ENCODE measurements at regions of chr13 and their contacts with region 1.

Region 1: DNA sequence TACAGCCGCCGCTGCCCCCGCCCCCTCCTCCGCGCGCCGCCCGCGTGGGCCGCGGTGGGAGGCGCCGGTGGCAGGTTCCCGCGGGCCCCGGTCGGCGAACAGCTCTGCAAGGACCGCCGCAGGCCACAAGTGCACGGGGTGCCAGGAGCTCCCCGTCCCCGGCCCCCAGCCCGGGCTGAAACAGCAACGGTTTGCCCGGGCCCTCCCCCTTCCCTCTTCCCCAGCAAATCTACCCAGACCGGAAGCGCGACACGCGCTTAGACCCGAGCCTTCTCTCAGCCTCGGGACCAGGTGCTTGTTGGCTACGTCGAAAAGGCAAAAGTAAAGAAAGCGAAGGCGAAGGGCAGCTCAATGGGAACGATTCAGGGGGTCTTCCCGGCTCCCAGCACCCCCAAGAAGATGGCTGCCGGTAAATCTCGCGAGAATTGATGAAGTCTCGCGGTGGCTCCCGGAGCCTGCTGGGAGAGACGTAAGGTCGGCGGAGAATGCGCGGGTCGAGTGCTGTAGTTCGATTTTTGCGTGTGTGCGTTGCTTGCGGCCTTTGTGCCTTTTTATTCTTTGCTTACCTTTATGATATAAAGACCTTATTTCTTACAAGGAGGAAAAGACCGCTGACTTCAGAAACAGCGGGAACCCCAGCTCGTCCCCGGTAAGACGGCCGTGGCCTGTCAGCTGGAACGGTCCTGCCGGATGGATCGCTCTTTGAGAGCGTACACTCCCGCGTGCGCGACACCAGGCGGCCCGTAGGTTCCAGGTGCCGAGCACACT is at the start of gene RBM26:
- DNase-seq: peak; percentile 96
- H3K4me3 Mint-ChIP-seq: peak within 1 kb of the TSS; percentile 91
- H3K27ac Mint-ChIP-seq: peak within 1 kb of the TSS; percentile 97
- H3K4me1 Mint-ChIP-seq: peaks cover 41% of the 10 kb centered on the region
- H3K27me3 Mint-ChIP-seq: no peaks in the 10 kb centered on the region
- total RNA-seq, gene RBM26: 44.4 to 44.7 TPM

Region 2: DNA sequence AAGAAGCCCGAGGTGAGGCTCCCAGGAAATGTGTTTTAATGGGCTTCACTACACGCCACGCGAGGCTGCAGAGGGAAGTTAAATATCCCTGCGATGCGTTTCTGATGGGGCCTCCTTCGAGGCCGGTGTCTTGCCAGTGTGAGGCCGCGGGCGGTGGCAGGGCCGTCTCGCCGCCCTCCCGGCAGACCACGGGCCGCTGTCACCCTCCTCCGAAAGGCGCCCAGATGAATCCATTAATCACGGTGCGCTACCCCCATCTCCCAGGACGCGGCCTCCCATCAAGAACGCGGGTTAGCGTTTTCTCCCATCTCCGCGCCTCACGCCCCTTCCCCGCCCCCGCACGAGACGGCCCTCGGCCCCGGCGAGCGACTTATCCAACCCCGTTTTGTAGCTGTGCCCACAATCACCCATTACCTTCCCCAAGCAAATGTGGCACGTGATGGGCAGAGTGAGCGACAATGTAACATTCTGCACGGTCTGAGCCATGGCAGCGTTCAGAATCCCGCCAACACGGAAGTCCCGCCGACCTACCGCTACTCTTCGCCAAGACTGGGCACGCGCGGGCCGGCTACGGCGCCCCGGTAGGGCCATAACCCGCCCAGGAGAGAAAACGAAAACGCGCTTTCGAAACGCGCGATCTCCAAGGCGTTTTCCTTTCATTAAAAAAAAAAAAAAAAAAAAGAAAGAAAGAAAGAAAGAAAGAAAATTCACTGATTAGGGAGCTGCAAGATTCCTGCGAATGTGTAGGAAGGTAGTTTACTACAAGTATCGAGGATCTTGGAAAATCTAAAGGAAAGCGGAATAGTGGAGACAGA is 747.2 kb before region 1 on chr13 and contains the start of gene OBI1:
- CTCF ChIA-PET with region 1: no interaction called
- intact Hi-C with region 1: loop called (anchors 2 kb)
- DNase-seq: peak; percentile 90
- H3K4me3 Mint-ChIP-seq: peak within 1 kb of the TSS; percentile 100
- H3K27ac Mint-ChIP-seq: peak within 1 kb of the TSS; percentile 96
- H3K4me1 Mint-ChIP-seq: peaks cover 35% of the 10 kb centered on the region
- H3K27me3 Mint-ChIP-seq: no peaks in the 10 kb centered on the region
- total RNA-seq, gene OBI1: 16.0 to 17.7 TPM

Region 3: DNA sequence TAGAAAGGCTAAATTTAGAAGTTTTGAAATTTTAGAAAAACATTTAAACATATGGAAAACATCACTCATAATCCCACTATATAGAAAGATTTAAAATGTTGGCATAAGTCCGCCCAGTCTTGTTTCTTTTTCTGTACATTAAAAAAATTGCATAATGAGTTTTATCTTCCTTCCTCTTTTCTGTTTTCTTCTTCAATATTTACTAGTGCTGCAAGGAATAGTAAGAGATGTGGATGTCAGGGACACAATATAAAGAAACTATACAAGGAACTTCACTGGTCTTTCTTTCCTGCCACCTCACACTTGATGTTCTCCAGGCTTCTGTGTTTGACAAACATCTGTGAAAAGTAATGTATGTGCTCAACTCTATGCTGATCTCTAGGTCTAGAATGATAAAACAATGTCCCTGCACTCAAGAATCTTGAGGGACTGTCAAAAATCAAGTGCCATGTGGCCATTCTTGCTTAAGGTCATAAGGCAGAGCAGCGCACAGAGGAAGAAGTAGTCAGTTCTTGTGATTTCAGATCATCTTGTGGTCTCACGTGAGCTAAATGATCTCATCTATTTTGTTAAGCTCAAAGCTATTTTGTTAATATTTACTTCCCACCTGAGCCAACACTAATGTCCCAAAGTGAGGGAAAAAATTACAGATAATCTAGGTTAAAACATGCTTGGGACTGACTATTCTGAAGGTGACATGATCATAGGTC is 560.2 kb before region 1 on chr13:
- CTCF ChIA-PET with region 1: no interaction called
- intact Hi-C with region 1: no loop called
- DNase-seq: no peak
- H3K4me3 Mint-ChIP-seq: no peak overlapping the region
- H3K27ac Mint-ChIP-seq: no peak overlapping the region
- H3K4me1 Mint-ChIP-seq: no peaks in the 10 kb centered on the region
- H3K27me3 Mint-ChIP-seq: peaks cover 6% of the 10 kb centered on the region

Region 4: GRCh38 chr13:79385694-79386093 is 20.3 kb before region 1 on chr13:
- CTCF ChIA-PET with region 1: interaction called, 6 read pairs
- intact Hi-C with region 1: loop called (anchors 1 kb)
- DNase-seq: peak; percentile 40
- H3K4me3 Mint-ChIP-seq: no peak overlapping the region
- H3K27ac Mint-ChIP-seq: no peak overlapping the region
- H3K4me1 Mint-ChIP-seq: peaks cover 71% of the 10 kb centered on the region
- H3K27me3 Mint-ChIP-seq: no peaks in the 10 kb centered on the region

Region 5: DNA sequence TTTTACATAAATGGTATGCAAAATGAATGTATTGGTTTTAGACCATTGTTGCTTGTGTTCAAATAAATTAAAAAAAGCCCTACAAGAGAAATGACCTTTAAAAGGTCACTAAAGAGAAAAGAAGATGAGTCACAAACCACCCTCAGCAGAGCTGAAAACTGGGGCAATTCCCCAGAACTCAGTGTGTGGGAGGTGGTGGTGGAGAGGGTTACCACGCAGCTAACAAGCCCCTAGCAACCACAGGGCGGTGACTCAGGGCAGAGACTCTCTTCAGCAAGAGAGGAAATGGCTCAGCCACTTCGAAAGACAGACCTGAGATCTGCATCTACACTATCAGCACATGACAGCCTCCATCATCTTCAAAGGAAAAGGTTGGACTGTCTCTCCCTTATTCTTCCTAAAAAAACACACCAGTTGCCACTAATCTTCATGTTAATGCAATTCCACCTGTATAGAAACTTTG is 45.5 kb after region 1 on chr13:
- CTCF ChIA-PET with region 1: interaction called, 5 read pairs
- intact Hi-C with region 1: loop called (anchors 1 kb)
- DNase-seq: peak; percentile 97
- H3K4me3 Mint-ChIP-seq: peak overlapping the region; percentile 68
- H3K27ac Mint-ChIP-seq: peak overlapping the region; percentile 93
- H3K4me1 Mint-ChIP-seq: peaks cover 62% of the 10 kb centered on the region
- H3K27me3 Mint-ChIP-seq: no peaks in the 10 kb centered on the region

Region 6: DNA sequence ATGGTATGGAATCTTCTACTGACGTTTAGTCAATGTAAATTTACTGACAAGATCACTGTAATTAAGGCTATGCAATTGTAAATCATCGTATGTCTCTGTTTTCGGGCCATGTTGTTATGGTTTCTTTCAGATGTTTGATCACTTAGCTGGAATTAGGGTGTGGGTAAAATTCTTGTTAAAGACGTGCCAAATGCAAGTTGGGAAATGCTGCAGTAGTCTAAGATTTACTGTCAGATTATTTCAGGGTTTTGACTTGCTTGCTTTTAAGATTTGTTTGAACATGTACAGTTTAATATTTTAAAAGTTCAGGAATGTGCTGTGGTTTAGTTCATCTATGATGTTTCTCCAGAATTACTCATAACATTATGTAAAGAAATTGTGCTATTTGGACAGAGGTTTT is 85.7 kb after region 1 on chr13:
- CTCF ChIA-PET with region 1: no interaction called
- intact Hi-C with region 1: loop called (anchors 2 kb)
- DNase-seq: no peak
- H3K4me3 Mint-ChIP-seq: peak overlapping the region; percentile 72
- H3K27ac Mint-ChIP-seq: peak overlapping the region; percentile 92
- H3K4me1 Mint-ChIP-seq: peaks cover 91% of the 10 kb centered on the region
- H3K27me3 Mint-ChIP-seq: no peaks in the 10 kb centered on the region

Region 7: DNA sequence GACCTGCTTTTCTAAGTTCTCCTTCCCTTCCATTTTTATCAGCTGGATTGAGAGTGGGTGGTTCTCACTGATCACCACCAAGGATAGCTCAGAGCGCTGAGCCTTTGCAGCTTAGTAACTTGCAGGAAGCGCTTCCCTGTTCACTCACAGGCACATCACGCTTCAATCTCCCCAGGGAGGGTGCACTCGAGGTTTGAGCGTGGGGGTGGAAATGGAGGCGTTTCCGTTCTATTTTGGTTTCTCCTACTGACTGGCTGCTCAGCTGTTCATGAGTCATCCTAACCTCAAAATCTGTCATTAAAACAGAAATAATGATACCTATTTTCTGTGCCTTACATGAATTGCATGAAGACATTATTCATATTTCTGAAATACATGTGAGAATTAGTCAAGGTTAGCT is 642.8 kb after region 1 on chr13:
- CTCF ChIA-PET with region 1: no interaction called
- intact Hi-C with region 1: loop called (anchors 5 kb)
- DNase-seq: peak; percentile 81
- H3K4me3 Mint-ChIP-seq: no peak overlapping the region
- H3K27ac Mint-ChIP-seq: no peak overlapping the region
- H3K4me1 Mint-ChIP-seq: peaks cover 10% of the 10 kb centered on the region
- H3K27me3 Mint-ChIP-seq: peaks cover 5% of the 10 kb centered on the region

Measured in activated naive CD4-positive, alpha-beta T cell treated with anti-CD3 and anti-CD28 coated beads for 36 hours (primary cell).